ENCODE measurements at regions of chr1 and their contacts with region 1.

Region 1: GRCh38 chr1:210373885-210374599 is 45.3 kb downstream of the HHAT start:
- DNase-seq: peak; percentile 89
- H3K4me3 ChIP-seq: no peak overlapping the region
- CTCF ChIP-seq: peak; percentile 81

Region 2: DNA sequence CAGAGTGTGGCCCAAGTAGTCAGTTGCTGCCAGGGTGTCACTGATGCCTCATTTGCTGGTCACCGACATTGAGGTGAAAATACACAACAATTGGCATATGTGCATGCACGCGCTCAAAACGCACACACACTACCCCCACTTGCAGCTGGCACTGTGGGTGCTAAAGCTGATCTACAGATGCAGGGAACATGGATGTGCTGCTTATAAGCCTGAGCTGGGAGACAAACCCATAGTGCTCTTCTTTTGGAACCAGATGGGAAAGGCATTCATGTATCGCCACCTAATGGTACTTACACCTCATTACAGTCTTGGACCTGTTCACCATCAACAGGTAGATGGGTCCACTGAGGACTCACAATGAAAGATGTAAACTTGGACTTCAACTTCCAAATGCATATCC is 860.8 kb before region 1 on chr1:
- CTCF ChIA-PET with region 1: no interaction called
- POLR2A ChIA-PET with region 1: no interaction called
- DNase-seq: no peak
- H3K4me3 ChIP-seq: no peak overlapping the region
- CTCF ChIP-seq: peak; percentile 63

Region 3: DNA sequence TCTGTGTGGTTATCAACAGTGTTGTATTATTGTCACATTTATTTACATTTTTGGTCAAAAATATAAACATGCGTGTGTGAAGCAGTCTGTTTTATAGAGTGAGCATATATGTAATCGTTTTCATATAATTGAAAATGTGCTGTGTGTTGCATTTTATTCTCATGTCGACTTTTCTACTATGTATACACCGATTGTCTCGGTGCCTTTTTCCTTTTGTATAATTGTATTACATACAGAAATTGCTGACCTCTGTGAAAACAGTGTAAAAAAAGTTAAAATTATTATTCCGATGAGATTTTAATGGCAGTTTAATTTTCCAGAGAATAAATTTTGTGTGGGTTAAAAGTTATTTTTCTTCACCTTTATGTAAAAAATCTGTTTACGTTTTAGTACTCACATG is 203.8 kb before region 1 on chr1:
- CTCF ChIA-PET with region 1: no interaction called
- POLR2A ChIA-PET with region 1: no interaction called
- DNase-seq: no peak
- H3K4me3 ChIP-seq: no peak overlapping the region
- CTCF ChIP-seq: no peak

Region 4: DNA sequence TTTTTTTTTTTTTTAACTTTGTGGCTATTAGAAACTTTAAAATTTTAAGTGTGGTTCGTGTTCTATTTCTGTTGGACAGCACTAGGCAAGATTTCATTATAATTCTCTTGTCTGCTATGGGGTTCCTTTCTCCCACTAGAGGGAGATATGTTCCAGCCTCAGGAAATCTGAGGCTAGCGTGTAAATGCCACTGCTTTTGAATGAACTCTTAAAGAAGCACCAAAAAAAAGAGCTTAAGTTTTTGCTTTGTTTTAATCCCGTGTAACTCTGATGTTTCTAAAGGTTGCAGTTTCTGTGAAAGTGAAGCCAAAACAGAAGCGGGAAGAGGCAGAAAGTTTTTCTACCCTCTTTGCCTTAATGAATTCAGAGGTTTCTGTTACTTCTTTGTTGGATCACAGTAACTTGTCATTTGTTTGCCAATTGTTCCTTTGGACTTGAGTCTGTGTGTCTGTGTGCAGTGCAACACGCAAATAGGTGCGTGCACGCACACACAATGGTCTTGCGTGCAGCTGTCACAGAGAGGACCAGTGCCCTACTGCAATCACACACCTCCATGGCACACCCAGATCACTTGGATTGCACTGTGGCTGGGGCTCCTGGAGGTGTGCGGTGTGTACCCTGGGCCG is 13.1 kb before region 1 on chr1:
- CTCF ChIA-PET with region 1: interaction called, 163 read pairs
- POLR2A ChIA-PET with region 1: no interaction called
- DNase-seq: peak; percentile 37
- H3K4me3 ChIP-seq: no peak overlapping the region
- CTCF ChIP-seq: peak; percentile 60

Region 5: GRCh38 chr1:210394281-210394821 is 20.3 kb after region 1 on chr1:
- CTCF ChIA-PET with region 1: interaction called, 411 read pairs
- POLR2A ChIA-PET with region 1: interaction called, 18 read pairs
- DNase-seq: no peak
- H3K4me3 ChIP-seq: no peak overlapping the region
- CTCF ChIP-seq: no peak

Region 6: GRCh38 chr1:210407207-210407886 is 33.3 kb after region 1 on chr1:
- CTCF ChIA-PET with region 1: interaction called, 411 read pairs
- POLR2A ChIA-PET with region 1: interaction called, 27 read pairs
- DNase-seq: no peak
- H3K4me3 ChIP-seq: no peak overlapping the region
- CTCF ChIP-seq: peak; percentile 81

Region 7: GRCh38 chr1:210438928-210439809 is 65.1 kb after region 1 on chr1:
- CTCF ChIA-PET with region 1: interaction called, 12 read pairs
- POLR2A ChIA-PET with region 1: interaction called, 24 read pairs
- DNase-seq: peak; percentile 100
- H3K4me3 ChIP-seq: no peak overlapping the region
- CTCF ChIP-seq: no peak

Region 8: DNA sequence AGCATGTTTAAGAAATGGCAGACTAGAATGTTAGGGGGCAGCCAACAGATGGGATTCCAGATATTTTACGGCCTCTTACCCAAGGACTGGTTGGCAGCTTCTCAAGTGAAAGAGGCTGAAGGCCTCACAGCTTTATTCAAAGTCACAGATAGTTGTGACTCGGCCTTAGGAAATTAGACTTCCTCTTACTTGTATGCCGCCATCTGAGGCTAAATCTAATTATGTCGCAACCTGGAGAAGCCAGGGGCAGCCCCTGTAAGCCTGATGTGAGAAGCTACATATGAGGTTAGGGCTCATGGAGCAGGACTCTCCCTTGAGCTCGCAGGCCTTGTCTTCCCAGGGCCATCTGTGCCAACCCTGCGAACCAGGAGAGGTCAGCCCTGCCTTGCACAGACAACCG is 307.1 kb after region 1 on chr1:
- CTCF ChIA-PET with region 1: no interaction called
- POLR2A ChIA-PET with region 1: no interaction called
- DNase-seq: peak; percentile 17
- H3K4me3 ChIP-seq: no peak overlapping the region
- CTCF ChIP-seq: no peak

Measured in AG04449 (cell line).